GM12878 (cell line): ENCODE measurements at regions of chr1 and their contacts with region 1.

Region 1: DNA sequence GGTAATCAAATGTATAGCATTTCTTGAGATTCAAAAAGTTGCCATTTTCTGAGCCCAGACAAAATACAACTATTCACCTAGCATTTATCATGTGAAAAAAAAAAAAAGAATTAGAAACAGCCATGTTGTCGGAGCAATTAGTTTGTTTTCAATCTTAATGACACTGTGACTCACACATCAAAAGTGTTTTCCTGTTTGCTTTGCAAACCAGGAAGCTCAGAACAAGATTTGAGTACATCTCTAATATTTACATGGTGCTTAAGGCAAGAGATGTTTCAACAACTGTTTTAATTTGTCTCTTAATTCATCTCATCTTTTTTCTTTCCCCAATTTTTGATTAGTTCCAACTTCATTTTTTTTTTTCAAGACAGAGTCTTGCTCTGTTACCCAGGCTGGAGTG is 62.5 kb upstream of the CAPZB start:
- DNase-seq: no peak
- ATAC-seq: no peak
- H3K4me3 ChIP-seq: no peak overlapping the region
- H3K27ac ChIP-seq: no peak overlapping the region
- H3K4me1 ChIP-seq: no peaks in the 10 kb centered on the region
- H3K27me3 ChIP-seq: no peaks in the 10 kb centered on the region
- CTCF ChIP-seq: no peak
- EP300 ChIP-seq: no peak
- POLR2A ChIP-seq: no peak
- RAD21 ChIP-seq: no peak

Region 2: GRCh38 chr1:19591482-19592091 is 43.8 kb after region 1 on chr1:
- CTCF ChIA-PET with region 1: no interaction called
- POLR2A ChIA-PET with region 1: interaction called, 10 read pairs
- RAD21 ChIA-PET with region 1: no interaction called
- SMC1A ChIA-PET with region 1: no interaction called
- in situ Hi-C with region 1: no loop called
- intact Hi-C with region 1: no loop called
- DNase-seq: no peak
- ATAC-seq: no peak
- H3K4me3 ChIP-seq: no peak overlapping the region
- H3K27ac ChIP-seq: no peak overlapping the region
- H3K4me1 ChIP-seq: no peaks in the 10 kb centered on the region
- H3K27me3 ChIP-seq: peaks cover 0 to 2% of the 10 kb centered on the region in 2 experiments; a peak in 1 of 4 replicates
- CTCF ChIP-seq: no peak
- EP300 ChIP-seq: no peak
- POLR2A ChIP-seq: no peak
- RAD21 ChIP-seq: no peak